IMR-90 (cell line): ENCODE measurements at regions of chr10 and their contacts with region 1.

Region 1: DNA sequence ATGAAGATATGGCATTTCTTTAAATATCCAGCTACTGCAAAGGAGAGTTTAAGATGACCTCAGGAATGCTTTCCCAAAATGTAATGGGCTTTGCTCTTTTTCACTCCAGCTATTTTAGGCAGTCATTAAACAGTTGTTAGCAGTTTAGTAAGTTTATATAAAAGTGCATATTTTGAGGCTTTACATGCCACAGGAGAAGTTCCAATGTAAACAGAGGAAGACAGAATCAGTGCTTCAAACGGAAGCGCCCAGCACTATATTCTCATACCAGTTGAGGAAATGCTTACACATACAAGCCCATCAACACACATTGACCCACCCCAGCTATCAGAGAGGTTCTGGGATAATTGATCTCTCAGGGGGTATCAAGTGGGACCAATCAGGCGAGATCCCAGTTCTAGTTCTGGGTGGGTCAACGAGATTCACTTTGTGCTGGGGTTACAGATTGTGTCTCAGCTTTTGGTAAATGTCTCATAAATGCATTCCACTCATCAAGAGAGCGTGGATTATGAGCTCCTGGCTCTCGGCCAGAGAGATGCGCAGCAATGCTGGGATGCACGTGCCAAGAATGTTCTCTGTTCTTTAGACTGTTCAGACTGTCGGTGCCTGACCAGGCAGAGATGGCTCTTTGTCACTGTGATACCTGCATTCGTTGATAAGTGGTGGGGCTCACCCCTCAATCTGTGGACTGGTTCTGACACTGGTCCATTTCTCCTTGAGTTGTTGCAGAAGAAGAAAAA is 55.0 kb downstream of the CACNB2 start:
- DNase-seq: peak; percentile 70
- ATAC-seq: peak; percentile 91
- H3K4me3 ChIP-seq: no peak overlapping the region
- H3K27ac ChIP-seq: peak overlapping the region; percentile 22; the same call in 1 of the 2 replicates
- H3K4me1 ChIP-seq: peaks cover 9% of the 10 kb centered on the region
- H3K27me3 ChIP-seq: no peaks in the 10 kb centered on the region; the same call in 1 of the 2 replicates
- CTCF ChIP-seq: no peak
- POLR2A ChIP-seq: no peak
- RAD21 ChIP-seq: no peak

Region 2: GRCh38 chr10:17854044-17854652 is 341.1 kb before region 1 on chr10:
- CTCF ChIA-PET with region 1: no interaction called
- POLR2A ChIA-PET with region 1: no interaction called
- dilution Hi-C with region 1: no loop called
- in situ Hi-C with region 1: no loop called
- intact Hi-C with region 1: no loop called
- DNase-seq: no peak
- ATAC-seq: no peak
- H3K4me3 ChIP-seq: no peak overlapping the region
- H3K27ac ChIP-seq: no peak overlapping the region
- H3K4me1 ChIP-seq: no peaks in the 10 kb centered on the region
- H3K27me3 ChIP-seq: peaks cover 9% of the 10 kb centered on the region; the same call in 1 of the 2 replicates
- CTCF ChIP-seq: no peak
- POLR2A ChIP-seq: no peak
- RAD21 ChIP-seq: no peak

Region 3: GRCh38 chr10:17882557-17882956 is 312.7 kb before region 1 on chr10:
- CTCF ChIA-PET with region 1: no interaction called
- POLR2A ChIA-PET with region 1: interaction called, 28 read pairs
- dilution Hi-C with region 1: no loop called
- in situ Hi-C with region 1: no loop called
- intact Hi-C with region 1: no loop called
- DNase-seq: no peak
- ATAC-seq: no peak
- H3K4me3 ChIP-seq: no peak overlapping the region
- H3K27ac ChIP-seq: no peak overlapping the region
- H3K4me1 ChIP-seq: no peaks in the 10 kb centered on the region
- H3K27me3 ChIP-seq: peaks cover 6% of the 10 kb centered on the region
- CTCF ChIP-seq: no peak
- POLR2A ChIP-seq: no peak
- RAD21 ChIP-seq: no peak